Left cardiac atrium (tissue), 4 donors: ENCODE measurements at regions of chr10 and their contacts with region 1.

Region 1: GRCh38 chr10:132387764-132388210 is 9.2 kb upstream of the PWWP2B start:
- DNase-seq: peak; percentile 74
- ATAC-seq: peak; percentile 54 to 60

Region 2: DNA sequence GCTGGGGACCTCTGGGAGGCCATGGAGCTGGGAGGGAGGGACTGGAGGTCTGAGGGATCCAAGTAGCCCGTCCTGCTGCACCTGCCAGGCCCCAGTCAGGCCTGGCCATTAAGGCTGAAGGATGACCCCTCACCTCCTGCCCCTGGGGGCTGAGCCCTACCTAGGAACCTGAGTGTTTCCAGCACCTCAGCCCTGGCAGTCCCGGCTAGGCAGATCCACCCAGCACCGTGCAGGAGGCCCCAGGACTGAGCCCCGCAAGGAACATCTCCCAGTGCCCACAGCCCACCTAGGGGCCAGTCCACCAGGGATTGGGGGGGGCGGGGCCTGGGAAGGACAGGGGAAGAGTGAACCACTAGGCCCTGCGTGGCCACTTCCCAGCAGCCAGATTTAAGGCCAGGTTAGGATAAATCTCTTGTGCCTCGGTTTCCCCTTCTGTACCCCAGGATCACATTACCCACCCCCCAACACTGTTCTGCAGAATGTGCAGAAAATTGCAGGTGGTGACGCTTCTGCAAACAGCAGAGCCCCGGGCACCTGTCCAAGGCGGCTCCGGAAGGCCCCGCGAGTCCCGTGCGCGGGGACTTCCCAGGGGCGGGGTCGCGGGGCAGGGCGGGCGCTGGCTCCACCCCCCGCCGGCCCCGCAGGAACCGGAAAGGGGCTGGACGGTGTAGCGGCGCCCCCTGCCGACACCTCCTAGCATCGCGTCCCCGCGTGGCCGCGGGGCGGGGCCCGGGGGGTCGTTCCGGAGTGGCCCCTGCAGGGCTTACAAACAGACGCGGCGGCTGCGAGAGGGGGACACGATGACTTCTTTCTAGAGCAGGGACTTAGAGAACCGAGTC is 65.1 kb after region 1 on chr10:
- intact Hi-C with region 1: loop called (anchors 1 to 2 kb)
- DNase-seq: peak; percentile 85
- ATAC-seq: peak; percentile 84 to 91

Region 3: DNA sequence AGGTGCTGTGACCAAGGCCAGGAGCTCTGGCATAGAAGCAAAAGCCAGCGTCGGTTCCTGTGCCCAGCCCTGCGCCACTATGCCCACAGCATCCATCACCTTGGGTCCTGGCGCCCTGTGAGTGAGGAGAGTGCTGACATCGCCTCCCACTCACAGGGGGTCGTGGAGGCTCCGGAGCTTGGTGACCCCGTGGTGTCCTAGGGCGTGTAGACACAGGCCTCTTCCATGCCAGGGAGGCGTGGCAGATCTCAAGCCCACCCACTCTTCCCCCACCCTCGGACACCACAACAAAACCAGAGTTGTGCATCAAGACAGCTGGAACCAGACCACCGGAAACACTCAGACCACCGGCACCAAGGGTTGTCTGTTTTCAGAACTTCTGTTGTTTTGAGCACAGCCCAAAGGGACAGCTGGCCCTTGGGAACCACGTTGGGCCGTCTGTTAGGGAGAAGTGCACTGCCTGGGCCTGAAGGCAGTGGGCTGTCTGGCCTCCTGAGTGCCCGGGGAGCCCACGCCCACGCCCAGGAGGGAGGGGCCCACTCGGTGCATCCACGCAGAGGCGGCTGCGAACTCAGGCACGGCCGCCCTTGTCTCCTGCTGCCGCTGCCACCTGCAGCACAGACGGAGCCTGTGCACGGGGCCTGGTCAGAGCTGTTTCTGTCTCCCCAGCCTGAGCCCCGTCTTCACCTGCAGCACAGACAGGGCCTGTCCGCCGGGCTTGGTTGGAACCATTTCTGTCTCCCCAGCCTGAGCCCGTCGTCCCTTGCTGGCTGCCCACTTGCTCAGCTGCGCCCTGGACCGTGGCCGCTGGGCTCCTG is 256.1 kb after region 1 on chr10:
- intact Hi-C with region 1: loop called in 1 of 2 experiments (anchors 10 kb)
- DNase-seq: no peak
- ATAC-seq: peak; percentile 18 to 20